Mammary epithelial cell (primary cell): ENCODE measurements at regions of chr10 and their contacts with region 1.

Region 1: DNA sequence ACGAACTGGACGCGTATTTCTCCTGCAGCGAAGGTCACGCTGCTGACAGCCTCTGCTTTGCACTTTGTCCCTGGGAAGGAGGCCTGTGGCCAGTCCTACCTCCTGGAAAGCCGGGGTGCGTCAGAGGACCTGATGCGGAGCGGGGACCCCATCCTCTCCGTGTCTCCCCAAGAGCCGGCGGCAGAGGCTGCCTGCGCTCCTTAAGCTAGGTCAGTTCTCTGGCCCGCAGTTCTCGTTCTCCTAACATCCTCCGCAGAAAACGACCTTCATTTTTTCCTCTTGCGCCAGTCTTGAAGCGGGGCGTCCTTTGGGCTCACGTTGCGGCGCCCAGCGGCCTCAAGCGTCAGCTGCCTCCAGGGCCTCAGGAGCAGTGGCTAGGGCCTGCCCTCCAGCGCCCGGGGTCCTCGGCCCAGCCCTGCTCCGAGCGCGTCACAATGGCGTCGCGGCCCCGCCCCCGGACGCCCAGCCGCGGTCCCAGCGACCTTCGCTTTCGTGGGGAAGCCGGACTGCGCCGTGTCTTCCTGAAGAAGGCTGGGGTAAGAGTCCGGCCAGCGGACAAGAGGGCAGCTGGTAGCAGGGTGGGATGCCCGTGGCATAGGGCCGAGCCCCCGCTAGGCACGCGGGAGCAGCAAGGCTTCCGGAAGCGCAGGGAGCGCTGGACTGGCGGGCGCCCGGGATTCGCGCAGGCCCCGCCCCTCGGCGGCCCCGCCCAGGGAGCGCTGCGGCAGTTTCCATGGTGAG is at the start of gene ZNF487:
- DNase-seq: peak; percentile 90
- H3K4me3 ChIP-seq: peak within 1 kb of the TSS; percentile 75 to 98 (median 79)
- H3K27ac ChIP-seq: peak within 1 kb of the TSS; percentile 97
- H3K4me1 ChIP-seq: no peaks in the 10 kb centered on the region
- H3K27me3 ChIP-seq: no peaks in the 10 kb centered on the region
- CTCF ChIP-seq: no peak
- total RNA-seq, gene ZNF487: 3.2 to 3.8 TPM

Region 2: DNA sequence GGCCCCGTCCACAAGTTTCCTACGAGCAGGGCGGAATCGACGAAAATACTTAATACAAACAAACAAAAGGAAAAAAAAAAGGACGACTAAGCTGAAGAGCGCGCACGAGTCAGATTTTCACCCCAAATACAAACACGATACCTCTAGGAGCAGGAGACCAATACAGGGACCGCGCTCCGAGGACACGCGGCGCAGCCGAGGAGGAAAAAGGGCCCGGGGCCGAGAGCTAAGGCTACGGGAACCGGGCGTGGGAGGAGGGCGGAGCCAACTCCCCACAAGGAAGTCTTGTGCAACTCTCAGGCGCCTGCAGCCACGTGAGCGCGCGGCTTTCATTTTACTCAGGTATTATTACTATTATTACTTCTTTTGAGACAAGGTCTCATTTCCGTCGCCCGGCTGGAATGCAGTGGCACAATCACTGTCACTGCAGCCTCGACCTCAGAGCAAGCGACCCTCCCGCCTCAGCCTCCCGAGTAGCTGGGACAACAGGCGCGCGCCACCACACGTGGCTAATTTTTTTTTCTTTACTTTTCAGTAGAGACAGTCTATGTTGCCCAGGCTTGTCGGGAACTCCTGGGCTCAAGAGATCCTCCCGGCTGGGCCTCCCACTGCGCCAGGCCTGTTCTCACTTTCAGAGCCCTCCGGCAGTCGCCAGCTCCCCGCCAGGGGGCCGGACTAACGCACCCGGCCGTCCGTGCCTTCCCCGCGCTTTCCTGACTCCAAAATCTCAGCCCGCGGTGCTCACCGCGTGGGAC is 28.8 kb before region 1 on chr10:
- CTCF ChIA-PET with region 1: no interaction called
- dilution Hi-C with region 1: no loop called
- in situ Hi-C with region 1: no loop called
- intact Hi-C with region 1: loop called (anchors 1 kb)
- DNase-seq: peak; percentile 86
- H3K4me3 ChIP-seq: peak overlapping the region; percentile 72 to 93 (median 89)
- H3K27ac ChIP-seq: peak overlapping the region; percentile 97
- H3K4me1 ChIP-seq: peaks cover 28% of the 10 kb centered on the region
- H3K27me3 ChIP-seq: no peaks in the 10 kb centered on the region
- CTCF ChIP-seq: peak; percentile 9 to 53

Region 3: DNA sequence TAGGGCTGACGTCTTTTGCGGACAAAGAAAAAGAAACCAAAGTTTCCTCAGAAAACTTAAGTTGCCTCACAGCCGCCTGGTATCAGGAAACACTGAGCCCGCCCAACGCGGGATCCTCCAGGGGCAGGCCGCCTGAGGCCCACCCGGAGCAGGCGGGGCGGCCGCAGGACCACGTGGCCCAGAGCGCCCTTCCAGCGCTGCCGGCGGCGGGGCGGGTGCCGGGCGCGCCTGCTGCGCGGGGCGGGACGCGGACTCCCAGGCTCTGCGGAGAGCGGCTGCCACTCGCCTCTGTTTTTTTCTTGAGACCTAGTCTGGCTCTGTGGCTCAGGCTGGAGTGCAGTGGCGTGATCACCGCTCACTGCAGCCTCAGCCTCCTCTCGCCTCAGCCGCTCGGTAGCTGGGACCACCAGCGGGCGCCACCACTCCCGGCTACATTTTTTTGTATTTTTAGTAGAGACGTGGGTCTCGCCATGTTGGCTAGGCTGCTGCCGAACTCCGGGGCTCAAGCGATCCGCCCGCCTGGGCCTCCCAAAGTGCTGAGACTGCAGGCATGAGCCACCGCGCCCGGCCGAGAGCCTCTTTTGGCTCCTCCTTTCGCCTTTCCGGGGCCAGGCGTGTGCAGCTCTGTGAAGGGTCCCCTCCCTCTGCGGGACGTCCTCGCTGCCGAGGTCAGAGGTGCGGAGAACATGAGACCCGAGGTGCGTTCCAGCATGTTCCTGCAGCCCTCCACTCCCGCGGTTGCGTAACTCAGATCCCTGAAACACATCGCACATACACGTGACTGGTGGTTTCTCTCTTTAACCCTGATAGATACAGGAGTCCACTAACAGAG is 16.0 kb before region 1 on chr10:
- CTCF ChIA-PET with region 1: no interaction called
- dilution Hi-C with region 1: no loop called
- in situ Hi-C with region 1: no loop called
- intact Hi-C with region 1: no loop called
- DNase-seq: peak; percentile 61
- H3K4me3 ChIP-seq: peak overlapping the region; percentile 27 to 56 (median 43)
- H3K27ac ChIP-seq: peak overlapping the region; percentile 21
- H3K4me1 ChIP-seq: peaks cover 17% of the 10 kb centered on the region
- H3K27me3 ChIP-seq: no peaks in the 10 kb centered on the region
- CTCF ChIP-seq: peak in 1 of 2 donors; percentile 13